ENCODE measurements at regions of chr1 and their contacts with region 1.

Region 1: DNA sequence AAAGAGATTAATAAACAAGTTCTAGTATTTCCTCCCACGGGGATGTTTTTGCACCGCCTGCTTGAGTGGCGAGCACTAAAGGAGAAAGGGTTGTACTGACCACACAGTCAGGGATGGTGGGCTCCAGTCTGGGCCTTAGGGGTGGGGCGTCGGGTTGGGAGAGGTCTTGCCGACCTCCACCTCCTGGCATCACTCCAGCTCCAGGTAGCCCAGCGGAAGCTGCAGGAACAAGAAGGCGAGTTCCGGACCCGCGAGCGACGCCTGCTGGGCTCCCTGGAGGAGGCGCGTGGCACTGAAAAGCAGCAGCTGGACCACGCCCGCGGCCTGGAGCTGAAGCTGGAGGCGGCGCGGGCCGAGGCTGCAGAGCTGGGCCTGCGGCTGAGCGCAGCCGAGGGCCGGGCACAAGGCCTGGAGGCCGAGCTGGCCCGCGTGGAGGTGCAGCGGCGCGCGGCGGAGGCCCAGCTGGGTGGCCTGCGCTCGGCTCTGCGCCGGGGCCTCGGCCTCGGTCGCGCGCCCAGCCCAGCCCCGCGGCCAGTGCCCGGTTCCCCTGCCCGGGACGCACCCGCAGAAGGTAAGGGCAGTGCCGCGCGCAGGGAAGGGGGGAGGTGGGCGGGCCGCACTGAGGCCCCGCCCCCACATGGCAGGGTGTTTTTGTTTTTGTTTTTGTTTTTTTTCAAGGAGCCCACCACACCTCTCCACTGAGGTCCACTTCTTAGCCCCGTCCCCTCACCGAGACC is 19.7 kb downstream of the MFAP2 start:
- DNase-seq: peak; percentile 85 to 86
- H3K4me3 ChIP-seq: peak overlapping the region; percentile 4 to 35
- H3K27ac ChIP-seq: peak overlapping the region; percentile 44 to 73
- H3K4me1 ChIP-seq: no peaks in the 10 kb centered on the region
- H3K27me3 ChIP-seq: no peaks in the 10 kb centered on the region
- CTCF ChIP-seq: peak; percentile 53 to 83 (median 72)
- POLR2A ChIP-seq: peak in 1 of 2 donors; percentile 34

Region 2: DNA sequence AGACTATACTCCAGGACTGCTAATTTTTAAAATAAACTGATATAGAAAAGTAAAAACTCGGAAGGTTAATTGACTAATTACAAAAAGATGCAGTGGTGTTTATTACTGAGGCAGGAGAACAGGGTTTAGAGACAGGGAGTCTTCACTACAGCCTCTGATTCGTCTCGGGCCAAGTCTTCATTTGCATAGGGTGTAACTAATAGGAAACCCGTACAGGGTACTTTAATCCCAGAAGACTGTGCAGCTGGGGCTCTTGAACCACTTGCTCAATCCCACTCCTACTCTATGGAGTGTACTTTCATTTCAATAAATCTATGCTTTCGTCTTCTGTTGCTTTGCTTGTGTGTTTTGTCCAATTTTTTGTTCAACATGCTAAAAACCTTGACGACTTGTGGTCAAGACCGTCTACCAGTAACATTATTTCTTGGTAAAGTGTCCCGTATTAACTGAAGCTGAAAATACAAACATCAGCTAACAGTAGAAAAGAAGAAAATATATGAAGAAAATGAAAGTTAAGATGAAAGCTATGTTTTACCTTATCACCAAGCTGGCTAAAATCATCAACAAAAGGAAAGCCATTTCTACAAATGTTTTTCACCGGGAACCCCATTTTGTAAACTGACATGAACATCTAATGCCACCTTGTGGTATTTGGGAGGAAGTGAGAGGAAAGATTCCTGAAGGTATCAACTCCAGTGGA is 85.1 kb after region 1 on chr1:
- intact Hi-C with region 1: loop called (anchors 5 kb)
- DNase-seq: no peak
- H3K4me3 ChIP-seq: peak overlapping the region in 1 of 2 donors; percentile 25
- H3K27ac ChIP-seq: peak overlapping the region; percentile 43 to 64
- H3K4me1 ChIP-seq: peaks cover 0 to 5% of the 10 kb centered on the region in 2 donors
- H3K27me3 ChIP-seq: no peaks in the 10 kb centered on the region
- CTCF ChIP-seq: peak; percentile 77 to 89 (median 82)
- POLR2A ChIP-seq: no peak

Measured in uterus (tissue), 4 donors.